Right ventricle myocardium inferior (tissue), 1 donor: ENCODE measurements at regions of chr3 and their contacts with region 1.

Region 1: DNA sequence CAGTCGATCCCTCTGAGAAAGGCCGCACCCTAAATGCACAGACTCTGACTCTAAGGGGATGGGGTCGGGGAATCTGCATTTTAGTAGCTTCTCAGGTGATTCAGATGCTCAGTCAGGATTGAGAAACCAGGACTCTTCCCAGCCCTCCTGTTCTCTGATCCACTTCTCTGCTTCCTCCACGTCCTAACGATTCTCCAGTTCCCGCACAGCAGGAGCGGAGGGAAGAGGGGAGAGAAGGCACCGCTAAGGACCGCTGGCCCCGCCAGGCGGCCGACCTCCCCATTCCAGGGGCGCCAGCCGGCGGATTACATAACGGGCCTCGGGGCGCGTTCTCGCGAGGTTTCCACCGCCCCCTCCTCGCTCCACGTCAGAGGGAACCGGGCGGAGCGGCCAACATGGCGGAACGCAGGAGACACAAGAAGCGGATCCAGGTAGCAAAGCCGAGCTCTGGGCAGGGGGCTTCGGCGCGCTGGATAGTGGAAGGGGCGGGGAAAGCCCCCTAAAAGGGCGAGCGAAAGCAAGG is at the start of gene SEC62:
- DNase-seq: peak; percentile 96
- ATAC-seq: peak; percentile 97
- total RNA-seq, gene SEC62: 78.0 TPM

Region 2: DNA sequence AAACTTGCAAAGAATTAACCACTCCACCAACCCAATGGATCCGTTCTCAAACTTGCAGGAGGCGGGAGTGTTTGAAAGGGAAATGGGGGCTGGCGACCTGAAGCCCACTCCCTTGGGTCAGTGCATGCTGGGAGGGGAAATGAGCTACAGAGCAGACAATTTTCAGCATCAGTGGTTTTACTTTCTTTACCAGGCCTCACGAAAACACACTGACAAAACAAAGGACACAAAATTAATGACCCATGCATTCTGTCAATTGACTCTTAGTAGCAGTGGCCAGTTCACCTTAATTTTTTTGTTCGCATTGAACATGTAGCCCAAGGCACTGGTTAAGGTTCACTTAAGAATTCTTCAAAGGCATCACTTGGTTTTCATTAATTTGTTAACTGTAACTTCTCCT is 716.5 kb before region 1 on chr3:
- intact Hi-C with region 1: no loop called
- DNase-seq: no peak
- ATAC-seq: no peak

Region 3: GRCh38 chr3:169772897-169773828 is 193.3 kb before region 1 on chr3 and contains the start of gene MYNN:
- intact Hi-C with region 1: loop called (anchors 10 kb)
- DNase-seq: peak; percentile 97
- ATAC-seq: peak; percentile 93
- total RNA-seq, gene MYNN: 12.2 TPM

Region 4: GRCh38 chr3:169836078-169836941 is 130.2 kb before region 1 on chr3:
- intact Hi-C with region 1: no loop called
- DNase-seq: no peak
- ATAC-seq: no peak

Region 5: DNA sequence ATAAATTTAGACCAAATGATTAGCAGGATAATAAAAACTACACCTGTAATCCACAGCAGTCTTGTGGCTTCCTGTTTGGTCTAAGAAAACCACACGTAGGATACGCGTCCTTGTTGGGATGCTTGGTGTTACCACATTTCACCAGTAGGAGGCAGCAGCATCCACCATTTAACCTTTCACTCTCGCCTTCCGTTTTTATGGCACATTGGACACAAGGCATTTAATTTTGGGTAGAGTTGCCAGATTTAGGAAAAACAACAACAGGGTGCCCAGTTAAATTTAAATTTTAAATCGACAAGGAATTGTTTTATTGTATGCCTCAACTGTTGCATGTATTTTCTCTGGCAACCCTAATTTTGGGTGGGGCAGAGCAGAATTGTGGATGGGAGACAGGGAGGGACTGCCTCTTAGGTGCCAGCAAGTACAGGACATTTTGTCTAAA is 103.0 kb before region 1 on chr3:
- intact Hi-C with region 1: loop called (anchors 1 kb)
- DNase-seq: no peak
- ATAC-seq: peak; percentile 62